ENCODE measurements at regions of chr2 and their contacts with region 1.

Region 1: GRCh38 chr2:32553829-32554432 is 73.9 kb upstream of the TTC27 start:
- DNase-seq: no peak
- ATAC-seq: peak; percentile 67

Region 2: GRCh38 chr2:33366473-33366872 is 812.5 kb after region 1 on chr2:
- intact Hi-C with region 1: loop called (anchors 10 kb)
- DNase-seq: no peak
- ATAC-seq: peak; percentile 91

Measured in Right ventricle myocardium inferior (tissue), 1 donor.